ENCODE measurements at regions of chr3 and their contacts with region 1.

Region 1: DNA sequence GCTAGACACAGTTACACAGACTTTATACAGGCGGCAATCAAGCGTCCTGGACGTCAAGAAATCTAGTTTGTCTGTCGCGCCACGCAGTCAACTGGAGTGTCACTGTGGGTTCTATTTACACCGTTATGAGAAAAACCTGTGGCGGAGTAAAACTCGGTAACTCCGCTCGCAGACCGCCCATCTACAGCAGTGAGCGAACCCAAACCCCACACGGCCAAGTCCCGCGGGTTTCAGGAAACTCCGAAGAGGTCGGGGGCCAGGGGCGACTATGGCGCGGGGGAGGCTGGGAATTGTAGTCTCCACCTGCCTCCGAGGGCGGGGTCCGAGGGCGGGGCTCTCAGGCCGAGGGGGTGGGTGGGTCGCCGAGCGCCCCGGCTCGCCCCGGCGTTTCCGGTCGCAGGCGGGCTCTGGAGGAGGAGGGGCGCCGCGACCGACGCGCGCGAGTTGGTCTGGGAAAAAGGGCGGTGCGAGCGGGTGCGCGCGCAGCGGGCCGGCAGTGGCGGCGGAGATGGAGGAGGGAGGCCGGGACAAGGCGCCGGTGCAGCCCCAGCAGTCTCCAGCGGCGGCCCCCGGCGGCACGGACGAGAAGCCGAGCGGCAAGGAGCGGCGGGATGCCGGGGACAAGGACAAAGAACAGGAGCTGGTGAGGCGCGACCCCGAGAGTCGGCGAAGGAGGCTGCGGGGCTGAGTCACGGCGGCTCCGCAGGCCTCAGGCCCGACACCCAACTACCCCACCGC is at the start of gene PSMD2:
- DNase-seq: peak; percentile 96
- H3K4me3 ChIP-seq: peak within 1 kb of the TSS; percentile 54 to 89
- H3K27ac ChIP-seq: peak within 1 kb of the TSS; percentile 78 to 81
- H3K4me1 ChIP-seq: peaks cover 5% of the 10 kb centered on the region
- H3K27me3 ChIP-seq: no peaks in the 10 kb centered on the region
- CTCF ChIP-seq: peak in 1 of 4 experiments; percentile 20
- POLR2A ChIP-seq: peak; percentile 56
- total RNA-seq, gene PSMD2: 230 to 272 TPM

Region 2: DNA sequence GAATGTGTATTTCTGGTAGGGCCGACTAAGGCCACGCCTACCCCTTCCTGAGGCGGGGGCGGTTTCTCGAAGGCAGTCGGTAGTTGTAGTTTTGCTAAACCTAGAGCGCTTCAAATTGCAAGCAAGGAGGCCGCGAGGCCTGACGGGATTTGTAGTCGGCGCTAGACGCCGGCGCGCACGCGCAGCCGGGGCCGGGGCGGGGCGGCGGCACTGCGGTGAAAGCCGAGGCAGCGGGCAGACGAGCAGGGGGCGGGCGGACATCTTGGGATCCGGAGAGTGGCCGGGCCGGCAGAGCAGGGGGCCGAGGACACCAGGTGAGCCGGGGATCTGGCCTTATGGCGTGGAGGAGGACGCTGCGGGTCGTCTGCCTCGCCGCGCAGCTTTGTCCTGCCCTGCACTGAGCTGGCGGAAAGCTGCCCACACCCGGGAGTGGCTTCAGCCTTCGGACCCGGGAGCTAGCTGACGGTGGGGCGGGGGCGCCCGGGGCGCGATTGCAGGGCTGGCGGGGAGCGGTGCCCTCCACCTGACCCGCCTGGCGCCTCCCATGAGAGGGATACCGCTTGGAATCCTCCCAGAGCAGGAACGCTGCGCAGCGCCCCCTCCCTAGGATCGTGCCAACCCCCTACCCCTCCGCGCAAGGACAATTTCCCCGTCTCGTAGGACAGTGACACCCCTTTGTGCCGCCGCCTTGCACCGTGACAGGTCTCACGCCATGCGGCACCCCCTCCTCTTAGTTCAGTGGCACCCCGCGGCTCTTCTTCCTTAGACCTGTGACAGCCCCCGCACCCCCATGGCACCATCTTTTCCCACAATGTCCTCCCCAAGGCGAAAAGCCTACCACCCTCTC is 124.1 kb before region 1 on chr3 and contains the start of gene AP2M1:
- intact Hi-C with region 1: loop called (anchors 5 kb)
- DNase-seq: peak; percentile 98
- H3K4me3 ChIP-seq: peak within 1 kb of the TSS; percentile 75 to 83
- H3K27ac ChIP-seq: peak within 1 kb of the TSS; percentile 83 to 88
- H3K4me1 ChIP-seq: peaks cover 18% of the 10 kb centered on the region
- H3K27me3 ChIP-seq: no peaks in the 10 kb centered on the region
- CTCF ChIP-seq: no peak
- POLR2A ChIP-seq: peak; percentile 89
- total RNA-seq, gene AP2M1: 183 to 307 TPM

Region 3: GRCh38 chr3:184314363-184314699 is 15.4 kb after region 1 on chr3 and contains the start of gene EIF4G1:
- intact Hi-C with region 1: loop called (anchors 2 kb)
- DNase-seq: peak; percentile 93
- H3K4me3 ChIP-seq: peak within 1 kb of the TSS; percentile 59 to 67
- H3K27ac ChIP-seq: peak within 1 kb of the TSS; percentile 93 to 96
- H3K4me1 ChIP-seq: peaks cover 14% of the 10 kb centered on the region
- H3K27me3 ChIP-seq: no peaks in the 10 kb centered on the region
- CTCF ChIP-seq: no peak
- POLR2A ChIP-seq: peak; percentile 71
- total RNA-seq, gene EIF4G1: 331 to 370 TPM

Region 4: GRCh38 chr3:184362668-184363540 is 64.0 kb after region 1 on chr3:
- intact Hi-C with region 1: loop called (anchors 5 kb)
- DNase-seq: peak; percentile 97
- H3K4me3 ChIP-seq: peak overlapping the region; percentile 64 to 71
- H3K27ac ChIP-seq: peak overlapping the region; percentile 94 to 97
- H3K4me1 ChIP-seq: peaks cover 3% of the 10 kb centered on the region
- H3K27me3 ChIP-seq: no peaks in the 10 kb centered on the region
- CTCF ChIP-seq: peak in 3 of 4 experiments; percentile 59 to 67 (median 66)
- POLR2A ChIP-seq: peak; percentile 81

Region 5: DNA sequence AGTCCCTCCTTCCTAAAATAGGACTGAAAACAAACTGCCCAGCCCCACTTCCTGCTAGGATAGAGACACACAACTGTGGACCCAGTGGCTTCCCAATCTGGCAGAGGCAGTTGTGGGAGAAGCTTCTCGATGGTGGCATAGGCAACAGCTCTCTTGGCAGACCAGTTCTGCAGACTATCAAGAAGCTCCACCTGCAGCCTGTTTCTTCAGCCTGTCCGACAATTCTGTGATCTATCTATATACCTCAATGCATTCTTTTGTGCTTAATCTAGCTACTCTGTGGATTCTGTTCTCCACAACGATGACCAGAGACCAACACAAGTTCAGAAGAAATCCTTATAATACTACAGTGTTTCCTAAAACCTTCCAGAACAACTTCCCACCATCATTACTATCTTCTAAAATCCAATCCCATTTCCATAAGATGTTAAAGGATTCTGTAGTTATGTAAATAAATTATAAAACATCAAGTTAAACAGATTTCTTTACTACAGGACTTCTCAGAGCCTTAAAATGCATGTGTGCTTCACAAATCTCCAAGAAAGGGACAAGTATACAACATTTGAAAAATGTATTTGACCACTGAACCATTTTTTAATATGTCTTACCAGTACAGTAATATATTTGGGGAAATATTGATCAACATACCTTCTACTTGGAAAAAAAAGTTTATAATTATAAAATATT is 1468.2 kb after region 1 on chr3:
- intact Hi-C with region 1: no loop called
- DNase-seq: no peak
- H3K4me3 ChIP-seq: no peak overlapping the region
- H3K27ac ChIP-seq: no peak overlapping the region
- H3K4me1 ChIP-seq: no peaks in the 10 kb centered on the region
- H3K27me3 ChIP-seq: peaks cover 3% of the 10 kb centered on the region
- CTCF ChIP-seq: no peak
- POLR2A ChIP-seq: no peak

Measured in prostate gland (tissue), 2 donors.